CD14-positive monocyte (primary cell): ENCODE measurements at regions of chr19 and their contacts with region 1.

Region 1: GRCh38 chr19:54937926-54938325 is 9.4 kb downstream of the NLRP7 start:
- DNase-seq: peak; percentile 13 to 67 (median 32)
- H3K4me3 ChIP-seq: no peak overlapping the region
- H3K4me3 Mint-ChIP-seq: no peak overlapping the region
- H3K27ac ChIP-seq: no peak overlapping the region
- H3K27ac Mint-ChIP-seq: no peak overlapping the region
- H3K4me1 ChIP-seq: peaks cover 0 to 6% of the 10 kb centered on the region in 2 donors
- H3K4me1 Mint-ChIP-seq: peaks cover 10% of the 10 kb centered on the region
- H3K27me3 ChIP-seq: peaks cover 0 to 17% of the 10 kb centered on the region in 2 donors
- H3K27me3 Mint-ChIP-seq: peaks cover 34 to 55% (median 41%) of the 10 kb centered on the region in 3 donors
- CTCF ChIP-seq: no peak

Region 2: DNA sequence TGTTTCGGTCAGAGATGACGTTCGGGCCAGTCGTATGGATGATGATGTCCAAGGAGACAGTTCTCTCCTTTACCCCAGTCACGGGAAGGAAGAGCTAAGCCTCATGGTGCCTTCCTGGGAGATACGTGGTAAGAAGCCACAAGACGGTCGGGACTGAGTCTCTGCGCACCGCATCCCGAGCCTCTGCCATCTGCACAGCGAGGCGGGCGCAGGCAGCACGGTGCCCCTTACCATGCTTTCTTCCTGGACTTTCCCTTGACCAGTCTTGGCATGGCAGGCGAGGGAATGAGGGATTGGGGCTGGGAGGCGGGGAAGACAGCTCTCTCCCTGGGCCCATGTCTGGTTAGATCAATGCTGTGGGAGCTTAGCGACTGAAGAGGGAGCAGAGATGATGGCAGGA is 445.4 kb before region 1 on chr19:
- intact Hi-C with region 1: loop called in 1 of 2 experiments (anchors 10 kb)
- DNase-seq: no peak
- H3K4me3 ChIP-seq: no peak overlapping the region
- H3K4me3 Mint-ChIP-seq: peak overlapping the region in 1 of 2 donors; percentile 90
- H3K27ac ChIP-seq: no peak overlapping the region
- H3K27ac Mint-ChIP-seq: no peak overlapping the region
- H3K4me1 ChIP-seq: no peaks in the 10 kb centered on the region
- H3K4me1 Mint-ChIP-seq: no peaks in the 10 kb centered on the region
- H3K27me3 ChIP-seq: peaks cover 47 to 88% of the 10 kb centered on the region in 2 donors
- H3K27me3 Mint-ChIP-seq: peaks cover 90 to 97% (median 91%) of the 10 kb centered on the region in 3 donors
- CTCF ChIP-seq: no peak

Region 3: DNA sequence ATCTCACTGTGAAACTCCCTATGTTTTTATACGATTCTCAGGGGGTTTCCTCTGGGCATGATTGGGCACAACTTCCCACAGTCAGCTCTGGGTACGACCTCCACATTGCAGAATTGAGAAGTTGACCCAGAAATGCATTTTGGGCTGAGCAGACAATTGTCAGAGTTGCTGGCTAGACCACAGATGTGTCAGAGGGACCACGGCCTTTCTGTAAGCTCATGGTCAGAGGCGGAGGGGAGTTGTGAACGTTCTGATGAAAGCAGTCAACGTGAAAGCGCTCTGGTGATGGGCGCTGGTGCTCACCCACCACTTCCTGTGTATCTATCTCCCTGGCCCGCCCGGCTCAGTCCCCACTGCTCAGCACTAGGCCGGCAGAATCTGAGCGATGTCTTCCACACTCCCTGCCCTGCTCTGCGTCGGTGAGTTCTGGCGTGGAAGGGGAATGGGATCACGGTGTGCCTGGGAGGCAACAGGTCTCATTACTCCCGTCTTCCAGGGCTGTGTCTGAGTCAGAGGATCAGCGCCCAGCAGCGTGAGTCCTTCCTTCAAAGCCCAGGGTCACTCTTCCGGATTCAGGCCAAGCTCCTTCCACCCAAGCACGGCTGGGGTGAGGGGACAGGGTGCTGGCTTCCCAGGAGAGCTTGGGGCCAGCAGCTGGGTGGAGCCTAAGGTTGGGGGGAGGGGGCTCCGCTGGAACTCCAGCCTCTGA is 32.0 kb before region 1 on chr19 and contains the start of gene NCR1:
- intact Hi-C with region 1: no loop called
- DNase-seq: peak in 2 of 3 donors; percentile 75 to 83
- H3K4me3 ChIP-seq: no peak within 1 kb of the TSS
- H3K4me3 Mint-ChIP-seq: peak within 1 kb of the TSS in 1 of 2 donors; percentile 39
- H3K27ac ChIP-seq: no peak within 1 kb of the TSS
- H3K27ac Mint-ChIP-seq: peak within 1 kb of the TSS in 6 of 7 donors; percentile 8 to 76 (median 52)
- H3K4me1 ChIP-seq: peaks cover 14 to 20% of the 10 kb centered on the region in 2 donors
- H3K4me1 Mint-ChIP-seq: peaks cover 27% of the 10 kb centered on the region
- H3K27me3 ChIP-seq: peaks cover 0 to 15% of the 10 kb centered on the region in 2 donors
- H3K27me3 Mint-ChIP-seq: peaks cover 10 to 24% (median 12%) of the 10 kb centered on the region in 3 donors
- CTCF ChIP-seq: no peak
- polyA plus RNA-seq, gene NCR1: 0.20 to 0.43 TPM in 2 of 3 donors, not detected in the other